PC-3 (cell line): ENCODE measurements at regions of chr2 and their contacts with region 1.

Region 1: DNA sequence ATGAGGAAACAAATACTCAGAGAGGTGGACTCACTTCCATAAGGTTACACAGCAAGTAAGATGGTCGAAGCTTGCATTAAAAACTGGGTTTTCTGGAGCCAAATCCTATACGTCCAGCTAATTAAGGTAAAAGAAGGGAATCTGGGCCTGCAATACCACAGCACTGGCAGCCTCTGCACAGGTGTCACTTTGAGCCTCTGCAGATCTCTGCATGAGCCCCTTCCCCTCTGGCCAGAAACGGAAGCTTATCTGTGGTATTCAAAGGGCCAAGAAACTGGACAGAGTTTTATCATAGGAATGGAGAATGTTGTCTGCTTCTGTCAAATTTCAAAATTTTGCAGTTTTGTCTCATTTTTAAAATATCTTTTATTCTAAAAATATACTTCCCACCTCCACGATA is 76.1 kb downstream of the OSR1 start:
- DNase-seq: no peak
- ATAC-seq: no peak
- H3K4me3 ChIP-seq: no peak overlapping the region
- H3K27ac ChIP-seq: no peak overlapping the region
- H3K4me1 ChIP-seq: no peaks in the 10 kb centered on the region
- H3K27me3 ChIP-seq: no peaks in the 10 kb centered on the region
- CTCF ChIP-seq: no peak

Region 2: DNA sequence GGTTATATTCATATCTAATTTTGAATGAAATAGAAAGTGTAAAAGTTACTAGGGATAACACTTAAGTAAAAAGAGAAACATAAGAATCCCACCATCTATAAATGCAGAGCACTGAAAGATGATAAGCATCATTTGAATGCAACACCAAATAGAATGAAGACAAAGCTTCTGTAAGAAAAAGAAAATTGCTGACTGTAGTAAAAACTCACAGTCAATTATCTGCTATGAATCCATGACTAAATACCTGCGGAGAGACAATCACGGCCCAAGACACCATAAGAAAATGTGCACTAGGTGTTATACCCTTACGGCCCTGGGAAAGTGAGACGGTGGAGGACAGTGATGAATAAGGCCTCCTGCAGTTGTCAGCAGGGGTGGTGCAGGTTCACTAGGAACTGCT is 121.5 kb after region 1 on chr2:
- CTCF ChIA-PET with region 1: no interaction called
- POLR2A ChIA-PET with region 1: no interaction called
- intact Hi-C with region 1: no loop called
- DNase-seq: no peak
- ATAC-seq: peak; percentile 59
- H3K4me3 ChIP-seq: no peak overlapping the region
- H3K27ac ChIP-seq: no peak overlapping the region
- H3K4me1 ChIP-seq: no peaks in the 10 kb centered on the region
- H3K27me3 ChIP-seq: no peaks in the 10 kb centered on the region
- CTCF ChIP-seq: no peak

Region 3: DNA sequence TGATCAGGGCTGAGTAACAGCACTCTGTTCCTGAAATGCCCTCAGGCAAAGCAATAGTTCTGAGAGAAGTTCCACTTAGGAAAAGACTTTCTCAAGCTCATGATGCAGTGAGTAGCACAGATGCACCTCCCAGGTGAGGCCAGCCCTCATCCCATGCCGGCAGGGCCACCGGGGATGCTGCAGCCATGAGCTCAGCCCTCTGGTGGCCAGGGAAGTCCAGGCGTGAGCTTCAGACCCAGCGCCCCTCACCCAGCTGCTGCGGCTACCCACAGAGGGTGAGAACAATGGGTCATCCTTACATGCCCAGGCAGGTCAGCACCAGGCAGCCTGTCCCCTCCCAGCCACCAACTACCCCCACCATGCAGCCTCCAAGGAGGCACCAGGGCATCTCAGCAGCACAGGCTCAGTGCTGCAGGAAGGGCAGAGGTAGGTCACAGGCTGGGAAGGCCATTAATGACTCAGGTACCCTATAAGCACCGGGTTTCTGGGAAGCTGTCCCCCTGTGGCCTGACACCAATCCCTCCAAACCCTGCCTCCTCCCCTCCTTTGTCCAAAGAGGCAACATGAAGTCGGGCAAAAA is 568.9 kb after region 1 on chr2:
- CTCF ChIA-PET with region 1: no interaction called
- POLR2A ChIA-PET with region 1: interaction called, 28 read pairs
- intact Hi-C with region 1: no loop called
- DNase-seq: peak; percentile 23
- ATAC-seq: peak; percentile 68
- H3K4me3 ChIP-seq: no peak overlapping the region
- H3K27ac ChIP-seq: no peak overlapping the region
- H3K4me1 ChIP-seq: peaks cover 9% of the 10 kb centered on the region
- H3K27me3 ChIP-seq: no peaks in the 10 kb centered on the region
- CTCF ChIP-seq: peak; percentile 52